Activated CD8-positive, alpha-beta T cell treated with anti-CD3 and anti-CD28 coated beads for 36 hours (primary cell): ENCODE measurements at regions of chr3 and their contacts with region 1.

Region 1: GRCh38 chr3:54676087-54676486 is 251.8 kb downstream of the LRTM1 start:
- DNase-seq: no peak
- ATAC-seq: no peak
- H3K4me3 Mint-ChIP-seq: no peak overlapping the region
- H3K27ac Mint-ChIP-seq: no peak overlapping the region
- H3K4me1 Mint-ChIP-seq: no peaks in the 10 kb centered on the region
- H3K27me3 Mint-ChIP-seq: peaks cover 2% of the 10 kb centered on the region
- CTCF ChIP-seq: no peak

Region 2: GRCh38 chr3:54653456-54654195 is 22.5 kb before region 1 on chr3:
- CTCF ChIA-PET with region 1: no interaction called
- POLR2A ChIA-PET with region 1: no interaction called
- intact Hi-C with region 1: loop called (anchors 2 kb)
- DNase-seq: no peak
- ATAC-seq: no peak
- H3K4me3 Mint-ChIP-seq: no peak overlapping the region
- H3K27ac Mint-ChIP-seq: no peak overlapping the region
- H3K4me1 Mint-ChIP-seq: no peaks in the 10 kb centered on the region
- H3K27me3 Mint-ChIP-seq: peaks cover 3% of the 10 kb centered on the region
- CTCF ChIP-seq: no peak